ENCODE measurements at regions of chr10 and their contacts with region 1.

Region 1: GRCh38 chr10:91163269-91163868 is 57.1 kb upstream of the PCGF5 start:
- DNase-seq: peak; percentile 71 to 86 (median 82)
- ATAC-seq: peak; percentile 11 to 68 (median 61)
- H3K4me3 ChIP-seq: peak overlapping the region; percentile 58 to 98 (median 93)
- H3K27ac ChIP-seq: peak overlapping the region; percentile 91 to 99 (median 96)
- H3K4me1 ChIP-seq: peaks cover 0 to 41% (median 15%) of the 10 kb centered on the region in 12 donors
- H3K27me3 ChIP-seq: no peaks in the 10 kb centered on the region
- CTCF ChIP-seq: peak in 1 of 12 donors; percentile 18
- POLR2A ChIP-seq: peak in 1 of 2 donors; percentile 36

Region 2: GRCh38 chr10:90920986-90921666 is 242.2 kb before region 1 on chr10 and contains the start of gene ANKRD1:
- intact Hi-C with region 1: loop called in 2 of 10 experiments (anchors 5 to 10 kb)
- DNase-seq: peak in 4 of 5 donors; percentile 69 to 79 (median 70)
- ATAC-seq: peak; percentile 73 to 94 (median 90)
- H3K4me3 ChIP-seq: peak within 1 kb of the TSS; percentile 11 to 67 (median 57)
- H3K27ac ChIP-seq: peak within 1 kb of the TSS; percentile 72 to 97 (median 87)
- H3K4me1 ChIP-seq: peaks cover 0 to 11% (median 3%) of the 10 kb centered on the region in 12 donors
- H3K27me3 ChIP-seq: no peaks in the 10 kb centered on the region
- CTCF ChIP-seq: no peak
- POLR2A ChIP-seq: peak in 1 of 2 donors; percentile 58
- total RNA-seq, gene ANKRD1: 1,315 to 6,714 (median 4,181) TPM

Region 3: DNA sequence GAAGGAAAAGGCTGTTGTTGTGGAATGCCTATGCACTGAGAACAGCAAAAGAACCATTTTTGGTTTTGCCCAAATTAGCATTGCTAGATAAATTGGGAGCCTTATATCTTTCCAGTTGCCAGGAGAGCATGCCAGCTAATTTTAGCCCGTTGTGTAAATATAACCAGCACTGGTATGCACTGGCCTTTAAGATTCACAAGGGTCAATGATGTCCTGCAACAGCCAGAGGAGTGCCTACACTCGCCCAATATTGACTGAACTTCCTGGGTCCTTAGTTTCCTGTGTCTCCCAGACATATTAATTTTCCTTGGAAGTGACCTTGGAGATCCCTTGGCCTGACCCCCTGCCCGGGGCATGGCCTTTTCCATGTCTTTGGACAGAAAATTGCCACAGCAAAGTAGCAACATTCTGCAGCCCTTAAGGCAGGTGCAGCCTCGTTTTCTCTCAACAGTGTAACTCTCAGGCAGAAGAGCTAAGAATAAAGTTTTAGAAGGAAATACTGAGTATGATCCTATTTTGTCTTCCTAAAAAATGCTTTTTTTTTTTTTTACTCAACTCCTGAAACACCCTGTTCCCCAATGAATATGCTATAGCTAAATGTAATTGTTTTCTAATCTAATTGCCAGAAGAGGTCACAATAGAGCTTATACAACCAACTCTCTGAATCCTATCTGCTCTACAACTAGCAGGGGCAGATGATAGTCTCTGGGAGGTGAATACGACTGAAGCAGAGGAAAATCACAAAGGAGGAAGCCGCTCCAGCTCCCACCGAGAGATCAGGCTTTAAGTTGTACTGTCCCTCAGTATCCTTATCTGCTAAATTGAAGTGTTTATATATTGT is 74.8 kb before region 1 on chr10:
- intact Hi-C with region 1: loop called in 3 of 10 experiments (anchors 5 to 10 kb)
- DNase-seq: peak in 3 of 5 donors; percentile 36 to 54 (median 47)
- ATAC-seq: peak; percentile 94 to 96 (median 95)
- H3K4me3 ChIP-seq: no peak overlapping the region
- H3K27ac ChIP-seq: peak overlapping the region; percentile 41 to 92 (median 72)
- H3K4me1 ChIP-seq: peaks cover 0 to 35% (median 6%) of the 10 kb centered on the region in 12 donors
- H3K27me3 ChIP-seq: no peaks in the 10 kb centered on the region
- CTCF ChIP-seq: peak in 4 of 12 donors; percentile 10 to 46 (median 24)
- POLR2A ChIP-seq: no peak

Region 4: DNA sequence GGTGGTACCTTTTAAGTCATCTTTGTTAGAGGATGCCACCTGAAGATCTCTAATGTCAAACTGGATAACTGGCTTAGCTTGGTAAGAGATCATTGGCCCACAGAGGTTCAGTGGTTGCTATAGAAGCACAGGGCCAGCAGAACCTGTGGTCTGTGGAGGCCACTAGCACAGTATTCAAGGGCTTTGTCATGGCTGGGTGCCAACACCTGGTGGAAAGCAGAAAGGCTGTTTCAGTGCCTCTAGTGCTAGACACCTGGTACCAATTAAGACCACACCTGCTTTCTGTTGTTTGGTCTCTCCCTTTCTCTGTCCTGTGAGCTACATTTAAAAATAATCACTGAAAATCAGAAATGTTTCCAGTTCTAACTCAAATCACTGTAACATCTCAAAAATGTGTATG is 47.1 kb after region 1 on chr10:
- intact Hi-C with region 1: loop called in 1 of 10 experiments (anchors 5 kb)
- DNase-seq: peak in 1 of 5 donors; percentile 52
- ATAC-seq: no peak
- H3K4me3 ChIP-seq: no peak overlapping the region
- H3K27ac ChIP-seq: no peak overlapping the region
- H3K4me1 ChIP-seq: peaks cover 0 to 45% (median 14%) of the 10 kb centered on the region in 12 donors
- H3K27me3 ChIP-seq: no peaks in the 10 kb centered on the region
- CTCF ChIP-seq: no peak
- POLR2A ChIP-seq: no peak

Region 5: GRCh38 chr10:91251430-91252056 is 88.2 kb after region 1 on chr10:
- intact Hi-C with region 1: loop called in 1 of 10 experiments (anchors 2 kb)
- DNase-seq: peak in 4 of 5 donors; percentile 28 to 52 (median 40)
- ATAC-seq: peak in 3 of 4 donors; percentile 63 to 78 (median 67)
- H3K4me3 ChIP-seq: no peak overlapping the region
- H3K27ac ChIP-seq: no peak overlapping the region
- H3K4me1 ChIP-seq: peaks cover 0 to 33% (median 10%) of the 10 kb centered on the region in 12 donors
- H3K27me3 ChIP-seq: no peaks in the 10 kb centered on the region
- CTCF ChIP-seq: peak; percentile 88 to 97 (median 94)
- POLR2A ChIP-seq: no peak

Measured in heart left ventricle (tissue), 16 donors.